GM10248 (cell line): ENCODE measurements at regions of chr4 and their contacts with region 1.

Region 1: GRCh38 chr4:89226665-89227574 is 80.7 kb downstream of the GPRIN3 start:
- DNase-seq: peak; percentile 31
- CTCF ChIP-seq: peak; percentile 77

Region 2: DNA sequence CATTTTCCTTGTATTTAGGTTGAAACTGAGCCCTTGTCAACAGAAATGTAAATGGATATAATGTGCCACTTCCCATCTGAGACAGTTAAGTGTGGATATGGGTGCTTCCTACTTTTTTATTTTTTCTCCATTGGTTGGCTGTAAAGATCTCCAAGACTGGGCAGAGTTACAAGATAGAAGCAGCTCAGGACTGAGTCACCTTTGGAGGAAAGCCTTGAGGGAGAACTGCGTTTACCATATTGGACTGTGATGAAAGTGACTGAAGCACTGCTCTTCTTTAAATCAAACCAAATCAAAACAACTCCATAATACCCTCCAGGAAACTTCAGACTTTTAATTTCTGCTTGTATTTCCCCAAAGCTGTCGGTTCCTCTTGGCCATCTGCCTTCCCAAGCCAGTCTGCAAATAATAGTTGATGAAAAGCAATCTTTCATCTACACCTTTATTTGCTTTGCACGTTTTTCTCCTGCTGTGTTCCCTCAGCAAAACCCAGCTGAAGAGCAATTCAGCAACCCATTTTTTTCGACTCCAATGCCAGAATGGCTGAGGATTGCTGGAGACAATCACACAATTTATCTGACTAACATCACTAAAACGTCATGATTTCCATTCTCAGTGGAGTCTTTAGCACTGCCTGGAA is 13.7 kb before region 1 on chr4:
- CTCF ChIA-PET with region 1: interaction called, 30 read pairs
- POLR2A ChIA-PET with region 1: no interaction called
- DNase-seq: no peak
- CTCF ChIP-seq: no peak

Region 3: GRCh38 chr4:89434364-89434988 is 207.6 kb after region 1 on chr4:
- CTCF ChIA-PET with region 1: interaction called, 16 read pairs
- POLR2A ChIA-PET with region 1: no interaction called
- DNase-seq: peak; percentile 20
- CTCF ChIP-seq: peak; percentile 67